Activated CD8-positive, alpha-beta T cell treated with anti-CD3 and anti-CD28 coated beads, Interleukin-2, amount 10 ng/mL, durations not matched to agents 7 days and 5 days (primary cell): ENCODE measurements at regions of chr2 and their contacts with region 1.

Region 1: GRCh38 chr2:176814306-176815052 is 398.1 kb upstream of the HNRNPA3 start:
- DNase-seq: peak; percentile 40
- ATAC-seq: no peak
- H3K4me3 Mint-ChIP-seq: no peak overlapping the region
- H3K27ac Mint-ChIP-seq: no peak overlapping the region
- H3K4me1 Mint-ChIP-seq: peaks cover 30% of the 10 kb centered on the region
- H3K27me3 Mint-ChIP-seq: no peaks in the 10 kb centered on the region

Region 2: GRCh38 chr2:176126929-176127773 is 687.3 kb before region 1 on chr2:
- CTCF ChIA-PET with region 1: interaction called, 12 read pairs
- POLR2A ChIA-PET with region 1: no interaction called
- DNase-seq: peak; percentile 75
- ATAC-seq: no peak
- H3K4me3 Mint-ChIP-seq: no peak overlapping the region
- H3K27ac Mint-ChIP-seq: no peak overlapping the region
- H3K4me1 Mint-ChIP-seq: peaks cover 16% of the 10 kb centered on the region
- H3K27me3 Mint-ChIP-seq: peaks cover 73% of the 10 kb centered on the region

Region 3: GRCh38 chr2:176653479-176654443 is 160.7 kb before region 1 on chr2:
- CTCF ChIA-PET with region 1: interaction called, 28 read pairs
- POLR2A ChIA-PET with region 1: no interaction called
- DNase-seq: peak; percentile 59
- ATAC-seq: peak; percentile 64
- H3K4me3 Mint-ChIP-seq: no peak overlapping the region
- H3K27ac Mint-ChIP-seq: no peak overlapping the region
- H3K4me1 Mint-ChIP-seq: peaks cover 24% of the 10 kb centered on the region
- H3K27me3 Mint-ChIP-seq: peaks cover 39% of the 10 kb centered on the region

Region 4: GRCh38 chr2:176830362-176830761 is 15.9 kb after region 1 on chr2:
- CTCF ChIA-PET with region 1: interaction called, 28 read pairs
- POLR2A ChIA-PET with region 1: no interaction called
- DNase-seq: peak; percentile 58
- ATAC-seq: peak; percentile 44
- H3K4me3 Mint-ChIP-seq: no peak overlapping the region
- H3K27ac Mint-ChIP-seq: peak overlapping the region; percentile 7
- H3K4me1 Mint-ChIP-seq: peaks cover 45% of the 10 kb centered on the region
- H3K27me3 Mint-ChIP-seq: no peaks in the 10 kb centered on the region

Region 5: DNA sequence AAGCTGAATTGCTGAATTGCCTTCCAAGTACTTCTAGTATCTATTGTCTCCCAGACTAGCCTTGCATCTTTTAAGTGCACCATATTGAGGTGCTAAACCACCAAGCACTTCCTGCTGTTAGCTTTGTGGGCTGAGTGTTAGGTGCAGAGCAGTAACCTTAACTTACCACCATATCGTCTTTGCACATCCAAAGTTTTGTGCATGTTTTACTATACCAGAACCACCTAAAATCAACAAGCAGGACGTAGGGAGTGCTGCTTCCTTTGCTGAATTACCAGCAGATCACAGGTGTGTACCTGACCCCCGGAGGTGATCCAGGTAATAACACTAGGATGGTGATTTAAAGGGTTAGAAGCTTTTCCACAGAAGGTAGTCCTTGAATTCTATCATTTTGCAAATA is 38.2 kb after region 1 on chr2:
- CTCF ChIA-PET with region 1: interaction called, 11 read pairs
- POLR2A ChIA-PET with region 1: no interaction called
- DNase-seq: peak; percentile 81
- ATAC-seq: peak; percentile 98
- H3K4me3 Mint-ChIP-seq: peak overlapping the region; percentile 6
- H3K27ac Mint-ChIP-seq: peak overlapping the region; percentile 81
- H3K4me1 Mint-ChIP-seq: peaks cover 65% of the 10 kb centered on the region
- H3K27me3 Mint-ChIP-seq: no peaks in the 10 kb centered on the region

Region 6: DNA sequence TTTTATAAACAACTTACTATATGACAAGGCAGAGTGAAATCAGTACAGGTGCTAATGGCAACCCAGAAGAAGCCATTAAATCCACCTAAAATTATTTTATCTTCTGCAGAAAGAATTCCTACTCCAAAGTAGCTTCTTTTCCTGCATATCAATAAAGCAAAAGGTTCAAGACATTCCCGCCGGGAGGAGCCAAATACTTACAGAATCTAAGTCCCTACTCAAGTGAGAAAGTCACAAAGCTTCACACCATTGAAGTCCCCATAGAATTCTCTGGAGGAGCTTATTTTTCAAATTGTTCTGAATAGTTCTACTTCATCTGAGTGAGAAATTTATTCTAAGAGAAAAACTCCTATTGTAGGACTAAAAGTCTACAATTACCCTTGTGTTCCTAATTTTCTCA is 164.4 kb after region 1 on chr2:
- CTCF ChIA-PET with region 1: no interaction called
- POLR2A ChIA-PET with region 1: no interaction called
- DNase-seq: no peak
- ATAC-seq: no peak
- H3K4me3 Mint-ChIP-seq: no peak overlapping the region
- H3K27ac Mint-ChIP-seq: no peak overlapping the region
- H3K4me1 Mint-ChIP-seq: no peaks in the 10 kb centered on the region
- H3K27me3 Mint-ChIP-seq: peaks cover 12% of the 10 kb centered on the region